HEK293 (cell line): ENCODE measurements at regions of chr14 and their contacts with region 1.

Region 1: GRCh38 chr14:20970983-20971704 is 15.9 kb downstream of the RNASE2 start:
- H3K4me3 ChIP-seq: peak overlapping the region; percentile 70
- H3K27ac ChIP-seq: peak overlapping the region; percentile 45; the same call in 1 of the 2 replicates
- H3K4me1 ChIP-seq: no peaks in the 10 kb centered on the region
- CTCF ChIP-seq: peak; percentile 84

Region 2: GRCh38 chr14:20855652-20856291 is 115.4 kb before region 1 on chr14:
- CTCF ChIA-PET with region 1: interaction called, 61 read pairs
- POLR2A ChIA-PET with region 1: no interaction called
- H3K4me3 ChIP-seq: no peak overlapping the region
- H3K27ac ChIP-seq: no peak overlapping the region
- H3K4me1 ChIP-seq: no peaks in the 10 kb centered on the region
- CTCF ChIP-seq: 0 out of 2 replicates have a peak, but pooled peaks have one; percentile 21

Region 3: GRCh38 chr14:20873370-20874177 is 97.6 kb before region 1 on chr14:
- CTCF ChIA-PET with region 1: interaction called, 21 read pairs
- POLR2A ChIA-PET with region 1: no interaction called
- H3K4me3 ChIP-seq: no peak overlapping the region
- H3K27ac ChIP-seq: no peak overlapping the region
- H3K4me1 ChIP-seq: no peaks in the 10 kb centered on the region
- CTCF ChIP-seq: peak; percentile 41; the same call in 1 of the 2 replicates

Region 4: GRCh38 chr14:20982646-20983369 is 11.7 kb after region 1 on chr14:
- CTCF ChIA-PET with region 1: interaction called, 56 read pairs
- POLR2A ChIA-PET with region 1: interaction called, 3 read pairs
- H3K4me3 ChIP-seq: no peak overlapping the region
- H3K27ac ChIP-seq: no peak overlapping the region
- H3K4me1 ChIP-seq: no peaks in the 10 kb centered on the region
- CTCF ChIP-seq: no peak

Region 5: GRCh38 chr14:21003788-21004346 is 32.7 kb after region 1 on chr14:
- CTCF ChIA-PET with region 1: interaction called, 11 read pairs
- POLR2A ChIA-PET with region 1: no interaction called
- H3K4me3 ChIP-seq: no peak overlapping the region
- H3K27ac ChIP-seq: no peak overlapping the region
- H3K4me1 ChIP-seq: no peaks in the 10 kb centered on the region
- CTCF ChIP-seq: no peak

Region 6: DNA sequence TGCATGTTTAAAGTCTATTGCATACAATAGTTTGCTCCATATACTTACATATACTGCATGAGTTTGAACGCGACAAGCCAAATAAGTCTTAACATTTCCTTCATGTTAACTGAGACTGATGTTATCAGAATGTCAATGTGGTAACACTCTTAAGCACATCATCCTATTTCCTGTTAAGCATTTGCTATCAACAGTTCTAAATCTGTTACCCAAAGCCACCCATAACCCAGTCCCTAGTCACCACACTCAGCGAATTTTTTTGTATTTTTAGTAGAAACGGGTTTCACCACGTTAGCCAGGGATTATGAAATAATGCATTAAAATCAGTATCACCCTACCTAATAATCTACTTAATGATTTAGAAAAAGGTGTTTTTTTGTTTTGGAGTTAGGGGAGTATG is 258.7 kb after region 1 on chr14:
- CTCF ChIA-PET with region 1: no interaction called
- POLR2A ChIA-PET with region 1: no interaction called
- H3K4me3 ChIP-seq: no peak overlapping the region
- H3K27ac ChIP-seq: no peak overlapping the region
- H3K4me1 ChIP-seq: no peaks in the 10 kb centered on the region
- CTCF ChIP-seq: no peak